Activated B cell treated with CpG ODN at 0.5 μM for 24 hours (primary cell): ENCODE measurements at regions of chr11 and their contacts with region 1.

Region 1: GRCh38 chr11:8870411-8871170 is 40.4 kb upstream of the AKIP1 start:
- DNase-seq: peak; percentile 16
- ATAC-seq: peak; percentile 5
- H3K4me3 Mint-ChIP-seq: peak overlapping the region; percentile 79
- H3K27ac Mint-ChIP-seq: no peak overlapping the region
- H3K4me1 Mint-ChIP-seq: peaks cover 25% of the 10 kb centered on the region
- H3K27me3 Mint-ChIP-seq: peaks cover 22% of the 10 kb centered on the region
- CTCF ChIP-seq: no peak

Region 2: GRCh38 chr11:8832571-8833260 is 37.9 kb before region 1 on chr11:
- CTCF ChIA-PET with region 1: no interaction called
- POLR2A ChIA-PET with region 1: no interaction called
- intact Hi-C with region 1: loop called (anchors 5 kb)
- DNase-seq: peak; percentile 22
- ATAC-seq: peak; percentile 96
- H3K4me3 Mint-ChIP-seq: no peak overlapping the region
- H3K27ac Mint-ChIP-seq: peak overlapping the region; percentile 74
- H3K4me1 Mint-ChIP-seq: peaks cover 16% of the 10 kb centered on the region
- H3K27me3 Mint-ChIP-seq: no peaks in the 10 kb centered on the region
- CTCF ChIP-seq: no peak

Region 3: DNA sequence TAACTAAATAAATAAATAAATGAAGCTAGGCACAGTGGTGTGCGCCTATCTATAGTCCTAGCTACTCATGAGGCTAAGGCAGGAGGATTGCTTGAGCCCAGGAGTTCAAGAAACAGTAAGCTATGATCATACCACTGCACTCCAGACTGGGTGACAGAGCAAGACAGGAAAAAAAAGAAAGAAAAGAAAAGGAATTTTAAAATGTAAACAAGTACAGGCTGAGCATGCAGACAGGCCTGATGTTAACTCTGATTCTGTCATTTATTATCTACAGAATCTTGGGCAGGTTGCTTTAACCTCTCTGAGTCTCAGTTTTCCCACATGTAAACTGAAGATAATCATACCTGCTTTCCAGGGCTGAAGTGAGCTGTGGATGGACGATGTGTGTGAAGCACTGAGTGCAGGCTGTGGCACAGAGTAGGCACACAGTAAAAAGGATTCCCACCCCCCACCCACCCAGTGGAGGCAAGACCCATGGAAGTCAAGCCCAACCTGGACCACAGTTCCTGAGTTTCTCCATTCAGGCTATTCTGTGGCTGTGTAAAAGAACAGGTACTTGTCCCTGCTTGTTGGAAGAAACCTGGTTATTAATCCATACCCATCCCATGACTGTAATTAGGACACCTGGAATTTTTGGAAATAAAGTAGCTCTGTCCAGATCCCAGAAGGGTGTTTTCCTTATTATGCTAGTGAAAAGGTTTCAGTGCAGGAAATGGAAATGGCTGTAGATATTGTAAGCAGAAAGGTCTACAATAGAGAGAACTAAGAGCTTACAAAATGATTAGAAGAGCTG is 239.5 kb after region 1 on chr11:
- CTCF ChIA-PET with region 1: no interaction called
- POLR2A ChIA-PET with region 1: no interaction called
- intact Hi-C with region 1: no loop called
- DNase-seq: no peak
- ATAC-seq: no peak
- H3K4me3 Mint-ChIP-seq: no peak overlapping the region
- H3K27ac Mint-ChIP-seq: no peak overlapping the region
- H3K4me1 Mint-ChIP-seq: no peaks in the 10 kb centered on the region
- H3K27me3 Mint-ChIP-seq: peaks cover 8% of the 10 kb centered on the region
- CTCF ChIP-seq: no peak

Region 4: DNA sequence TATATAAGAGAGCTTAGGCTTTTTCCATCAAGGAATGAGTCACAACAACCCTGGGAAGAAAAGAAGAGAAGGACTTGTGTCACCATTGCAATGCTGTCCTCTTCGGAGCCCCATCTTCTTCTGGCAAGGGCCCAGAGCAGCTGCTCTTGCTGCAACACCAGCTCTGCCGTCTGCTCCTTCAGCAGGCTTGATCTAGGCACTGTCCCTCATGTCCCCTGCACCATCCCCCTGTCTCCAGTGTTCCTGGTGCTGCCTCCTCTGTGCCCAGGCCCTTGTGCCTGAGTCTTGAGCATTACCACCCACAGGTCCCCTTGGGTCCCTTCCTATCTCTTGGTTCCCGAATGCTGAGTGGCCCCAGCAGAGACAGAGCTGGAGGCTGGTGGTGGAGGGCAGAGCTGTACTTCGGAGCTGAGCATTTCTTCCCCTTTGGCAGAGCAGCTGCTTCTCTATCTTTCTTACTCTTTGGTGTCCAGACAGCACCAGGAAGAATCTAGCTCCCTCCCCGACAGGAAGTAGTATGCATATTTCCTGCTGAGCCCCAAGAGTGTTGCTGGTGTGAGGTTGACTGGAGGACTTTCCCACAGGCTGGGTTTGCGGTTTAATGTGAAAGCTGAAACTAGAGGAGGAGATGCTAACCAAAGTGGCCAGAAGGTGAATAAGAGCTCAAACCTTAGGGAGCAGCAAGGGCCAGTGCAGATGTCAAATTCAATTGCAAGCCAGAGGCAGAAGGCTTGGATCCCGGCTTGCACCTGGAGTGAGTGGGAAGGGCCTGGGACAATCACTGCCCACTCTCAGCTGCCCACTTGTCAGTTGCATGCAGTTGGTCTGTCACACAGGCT is 730.7 kb after region 1 on chr11:
- CTCF ChIA-PET with region 1: no interaction called
- POLR2A ChIA-PET with region 1: no interaction called
- intact Hi-C with region 1: no loop called
- DNase-seq: peak; percentile 53
- ATAC-seq: peak; percentile 76
- H3K4me3 Mint-ChIP-seq: peak overlapping the region; percentile 85
- H3K27ac Mint-ChIP-seq: peak overlapping the region; percentile 96
- H3K4me1 Mint-ChIP-seq: peaks cover 59% of the 10 kb centered on the region
- H3K27me3 Mint-ChIP-seq: no peaks in the 10 kb centered on the region
- CTCF ChIP-seq: no peak